Upper lobe of right lung (tissue), 1 donor: ENCODE measurements at regions of chr1 and their contacts with region 1.

Region 1: DNA sequence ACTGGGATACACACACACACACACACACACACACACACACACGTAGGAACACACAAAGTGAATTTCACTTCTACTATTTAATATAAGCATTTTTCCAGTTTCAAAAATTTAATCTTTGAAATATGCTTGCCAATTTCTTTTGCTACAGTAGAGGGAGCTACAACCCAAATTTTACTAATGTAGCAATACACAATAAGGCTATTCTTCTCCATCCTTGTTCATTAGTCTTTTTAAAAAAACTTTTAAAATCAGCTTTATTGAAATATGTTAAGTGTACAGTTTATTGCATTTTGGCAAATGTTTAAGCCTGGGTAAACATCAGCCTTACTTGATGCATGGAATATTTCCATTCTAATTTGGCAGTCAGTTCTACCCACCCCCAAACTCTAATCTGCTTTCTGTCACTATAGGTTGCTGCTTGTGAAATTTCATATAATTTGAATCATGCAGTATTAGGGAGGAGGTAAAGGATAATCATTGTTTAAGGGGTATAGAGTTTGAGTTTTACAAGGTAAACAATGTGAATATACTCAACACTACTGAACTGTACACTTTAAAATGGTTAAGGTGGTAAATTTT is 93.0 kb upstream of the TENT5C start:
- DNase-seq: no peak
- ATAC-seq: no peak
- H3K4me3 ChIP-seq: no peak overlapping the region
- H3K27ac ChIP-seq: no peak overlapping the region
- H3K4me1 ChIP-seq: no peaks in the 10 kb centered on the region
- H3K27me3 ChIP-seq: no peaks in the 10 kb centered on the region
- CTCF ChIP-seq: peak; percentile 49

Region 2: GRCh38 chr1:117674521-117675397 is 161.9 kb after region 1 on chr1:
- intact Hi-C with region 1: loop called (anchors 5 kb)
- DNase-seq: no peak
- ATAC-seq: peak; percentile 24
- H3K4me3 ChIP-seq: no peak overlapping the region
- H3K27ac ChIP-seq: no peak overlapping the region
- H3K4me1 ChIP-seq: no peaks in the 10 kb centered on the region
- H3K27me3 ChIP-seq: no peaks in the 10 kb centered on the region
- CTCF ChIP-seq: peak; percentile 41

Region 3: DNA sequence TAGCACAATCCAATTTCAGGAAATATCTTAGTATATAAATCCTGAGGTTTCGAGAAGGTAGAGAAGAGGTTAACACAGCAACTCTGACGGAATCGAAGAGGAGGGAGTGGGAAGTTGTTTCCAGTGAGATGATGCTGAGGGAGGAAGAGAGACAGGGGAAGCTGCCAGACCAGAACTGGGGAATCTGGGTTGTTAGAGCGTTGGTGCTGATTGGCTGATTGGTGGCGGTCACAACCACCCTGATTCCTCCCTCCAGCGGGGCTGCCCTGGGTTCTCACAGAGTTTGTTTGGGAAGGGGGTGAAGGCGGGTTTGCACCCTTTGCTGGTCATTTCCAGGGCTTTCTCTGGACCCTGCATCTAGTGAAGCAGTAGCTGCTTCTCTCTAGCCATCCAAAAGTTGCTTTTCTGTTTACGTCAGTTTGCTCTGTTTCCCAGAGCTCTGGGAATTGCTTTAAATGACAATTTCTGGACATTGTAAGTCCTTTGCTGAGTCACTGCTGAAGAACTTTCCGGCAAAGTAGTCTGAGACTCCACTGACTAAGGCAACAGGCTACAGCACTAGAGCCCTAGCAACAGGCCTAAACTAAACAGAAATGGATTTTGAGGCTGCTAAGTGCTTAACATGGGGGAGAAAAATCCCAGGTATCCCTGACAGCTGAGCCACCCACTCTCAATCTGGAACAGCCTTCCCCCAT is 183.1 kb after region 1 on chr1:
- intact Hi-C with region 1: no loop called
- DNase-seq: no peak
- ATAC-seq: peak; percentile 51
- H3K4me3 ChIP-seq: no peak overlapping the region
- H3K27ac ChIP-seq: peak overlapping the region; percentile 33
- H3K4me1 ChIP-seq: peaks cover 5% of the 10 kb centered on the region
- H3K27me3 ChIP-seq: no peaks in the 10 kb centered on the region
- CTCF ChIP-seq: no peak

Region 4: GRCh38 chr1:117758444-117759316 is 245.8 kb after region 1 on chr1:
- intact Hi-C with region 1: loop called (anchors 10 kb)
- DNase-seq: peak; percentile 70
- ATAC-seq: peak; percentile 95
- H3K4me3 ChIP-seq: peak overlapping the region; percentile 45
- H3K27ac ChIP-seq: no peak overlapping the region
- H3K4me1 ChIP-seq: peaks cover 11% of the 10 kb centered on the region
- H3K27me3 ChIP-seq: no peaks in the 10 kb centered on the region
- CTCF ChIP-seq: peak; percentile 91